ENCODE measurements at regions of chr4 and their contacts with region 1.

Region 1: GRCh38 chr4:46765465-46765864 is 143.6 kb downstream of the COX7B2 start:
- DNase-seq: no peak
- ATAC-seq: no peak
- H3K4me3 Mint-ChIP-seq: no peak overlapping the region
- H3K27ac Mint-ChIP-seq: no peak overlapping the region
- H3K4me1 Mint-ChIP-seq: no peaks in the 10 kb centered on the region
- H3K27me3 Mint-ChIP-seq: no peaks in the 10 kb centered on the region

Region 2: DNA sequence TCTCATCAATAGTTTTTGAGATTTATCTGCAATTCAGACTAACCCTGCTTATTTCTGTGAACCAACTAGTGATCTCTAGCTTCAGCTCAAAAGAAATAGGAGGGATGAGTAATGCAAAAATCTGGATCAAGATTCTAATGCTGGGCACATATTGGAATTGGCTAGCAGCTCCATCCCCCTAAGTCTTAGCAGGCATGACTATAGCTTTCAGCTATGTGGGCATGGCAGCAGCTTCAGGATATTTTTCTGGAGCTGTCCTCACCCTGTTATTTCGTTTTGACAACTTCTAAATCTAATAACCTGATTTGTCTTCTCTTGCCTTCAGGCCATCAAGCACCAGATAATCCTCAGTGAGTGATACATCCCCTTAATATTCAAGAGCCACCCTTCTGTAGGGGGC is 1988.3 kb before region 1 on chr4:
- CTCF ChIA-PET with region 1: no interaction called
- POLR2A ChIA-PET with region 1: no interaction called
- intact Hi-C with region 1: loop called in 1 of 2 experiments (anchors 5 kb)
- DNase-seq: no peak
- ATAC-seq: no peak
- H3K4me3 Mint-ChIP-seq: no peak overlapping the region
- H3K27ac Mint-ChIP-seq: no peak overlapping the region
- H3K4me1 Mint-ChIP-seq: no peaks in the 10 kb centered on the region
- H3K27me3 Mint-ChIP-seq: peaks cover 2% of the 10 kb centered on the region

Region 3: GRCh38 chr4:46425775-46426400 is 339.6 kb before region 1 on chr4:
- CTCF ChIA-PET with region 1: no interaction called
- POLR2A ChIA-PET with region 1: no interaction called
- intact Hi-C with region 1: no loop called
- DNase-seq: no peak
- ATAC-seq: no peak
- H3K4me3 Mint-ChIP-seq: no peak overlapping the region
- H3K27ac Mint-ChIP-seq: no peak overlapping the region
- H3K4me1 Mint-ChIP-seq: no peaks in the 10 kb centered on the region
- H3K27me3 Mint-ChIP-seq: no peaks in the 10 kb centered on the region

Region 4: DNA sequence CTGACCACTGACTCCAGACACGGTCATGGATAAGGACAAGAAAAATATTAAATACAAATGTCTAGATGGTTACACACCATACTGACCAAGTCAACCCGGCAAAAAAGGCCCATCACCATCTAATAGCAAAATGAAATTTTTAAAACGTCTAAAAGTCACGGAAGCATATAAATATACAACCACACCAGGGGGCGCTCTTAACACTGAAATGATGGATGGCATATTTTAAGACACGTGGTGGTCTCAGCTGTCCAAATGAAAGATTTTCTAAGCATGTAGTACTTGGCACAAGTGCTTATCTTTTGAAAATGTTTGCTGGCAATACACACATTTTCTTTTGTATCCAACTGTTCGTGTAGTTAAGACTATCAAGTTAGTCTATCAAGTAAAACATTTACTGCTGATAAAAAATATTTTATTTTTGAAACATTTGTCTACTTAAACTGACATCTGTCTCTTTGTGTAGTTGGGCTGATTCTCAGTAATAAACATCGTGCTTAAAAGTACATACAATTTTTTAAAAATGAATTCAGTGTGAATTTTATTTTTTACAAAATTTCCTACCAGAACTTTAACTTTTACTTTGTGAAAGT is 79.0 kb after region 1 on chr4:
- CTCF ChIA-PET with region 1: no interaction called
- POLR2A ChIA-PET with region 1: no interaction called
- intact Hi-C with region 1: no loop called
- DNase-seq: peak; percentile 65
- ATAC-seq: no peak
- H3K4me3 Mint-ChIP-seq: no peak overlapping the region
- H3K27ac Mint-ChIP-seq: no peak overlapping the region
- H3K4me1 Mint-ChIP-seq: no peaks in the 10 kb centered on the region
- H3K27me3 Mint-ChIP-seq: no peaks in the 10 kb centered on the region